GM12878 (cell line): ENCODE measurements at regions of chr14 and their contacts with region 1.

Region 1: DNA sequence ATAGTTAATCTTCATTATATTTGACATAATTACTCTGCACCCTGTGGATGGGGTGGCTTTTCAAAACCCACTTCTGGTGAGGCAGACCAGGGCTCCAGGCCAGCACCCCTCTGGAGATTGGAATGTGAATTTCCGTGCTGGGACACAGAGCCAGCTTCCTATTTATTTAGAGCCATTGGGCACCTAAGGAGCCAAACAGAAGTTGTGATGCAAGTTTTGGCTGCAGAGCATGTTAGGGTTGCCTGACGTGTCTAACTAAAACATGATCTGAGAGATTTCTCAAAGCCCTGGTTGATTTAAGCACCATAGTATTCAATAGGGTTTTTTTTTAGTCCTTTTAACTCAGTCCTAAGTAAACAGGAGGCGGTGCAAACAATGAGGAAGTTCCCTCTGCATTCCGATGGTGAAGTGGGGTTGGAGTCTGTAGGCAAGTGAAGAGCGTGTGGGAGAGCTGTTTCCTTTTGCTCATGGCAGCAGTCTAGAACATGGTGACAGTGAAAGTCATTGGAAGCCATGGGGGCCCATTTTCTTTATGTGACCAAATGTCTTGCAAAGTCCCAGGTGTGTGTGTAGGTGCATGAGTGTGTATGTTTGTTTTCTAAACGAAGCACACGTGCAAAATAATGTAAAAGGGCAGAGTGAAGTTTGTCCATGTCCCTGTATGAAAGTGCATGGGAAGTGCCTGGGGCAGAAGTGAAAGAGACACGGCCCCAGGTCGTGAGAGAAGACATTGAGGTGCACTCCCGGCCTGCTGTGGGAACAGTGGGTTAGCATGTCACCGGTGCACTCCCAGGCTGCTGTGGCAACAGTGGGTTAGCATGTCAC is 117.7 kb downstream of the PRKCH start:
- DNase-seq: peak; percentile 90
- ATAC-seq: peak; percentile 74
- H3K4me3 ChIP-seq: peak overlapping the region; percentile 54
- H3K27ac ChIP-seq: peak overlapping the region; percentile 93
- H3K4me1 ChIP-seq: peaks cover 39% of the 10 kb centered on the region
- H3K27me3 ChIP-seq: no peaks in the 10 kb centered on the region
- CTCF ChIP-seq: no peak
- EP300 ChIP-seq: peak in 1 of 2 experiments; percentile 59; a peak in 1 of 4 replicates
- POLR2A ChIP-seq: no peak; the same call in 1 of the 2 replicates
- RAD21 ChIP-seq: 0 out of 2 replicates have a peak, but pooled peaks have one; percentile 0

Region 2: GRCh38 chr14:61321385-61322010 is 117.6 kb before region 1 on chr14 and contains the start of gene PRKCH:
- CTCF ChIA-PET with region 1: interaction called, 3 read pairs
- POLR2A ChIA-PET with region 1: interaction called, 9 read pairs
- RAD21 ChIA-PET with region 1: interaction called, 4 read pairs
- SMC1A ChIA-PET with region 1: interaction called, 10 read pairs
- in situ Hi-C with region 1: loop called (anchors 25 kb)
- intact Hi-C with region 1: loop called (anchors 1 kb)
- DNase-seq: no peak
- ATAC-seq: peak; percentile 81
- H3K4me3 ChIP-seq: peak within 1 kb of the TSS; percentile 95
- H3K27ac ChIP-seq: peak within 1 kb of the TSS; percentile 80
- H3K4me1 ChIP-seq: peaks cover 6% of the 10 kb centered on the region; the same call in 1 of the 2 replicates
- H3K27me3 ChIP-seq: no peaks in the 10 kb centered on the region; a peak in 1 of 4 replicates
- CTCF ChIP-seq: peak; percentile 3 to 50 (median 20); a peak in 3 of 6 replicates
- EP300 ChIP-seq: no peak
- POLR2A ChIP-seq: peak; percentile 84
- RAD21 ChIP-seq: peak; percentile 41
- polyA plus RNA-seq, gene PRKCH: 10.7 to 12.0 TPM

Region 3: DNA sequence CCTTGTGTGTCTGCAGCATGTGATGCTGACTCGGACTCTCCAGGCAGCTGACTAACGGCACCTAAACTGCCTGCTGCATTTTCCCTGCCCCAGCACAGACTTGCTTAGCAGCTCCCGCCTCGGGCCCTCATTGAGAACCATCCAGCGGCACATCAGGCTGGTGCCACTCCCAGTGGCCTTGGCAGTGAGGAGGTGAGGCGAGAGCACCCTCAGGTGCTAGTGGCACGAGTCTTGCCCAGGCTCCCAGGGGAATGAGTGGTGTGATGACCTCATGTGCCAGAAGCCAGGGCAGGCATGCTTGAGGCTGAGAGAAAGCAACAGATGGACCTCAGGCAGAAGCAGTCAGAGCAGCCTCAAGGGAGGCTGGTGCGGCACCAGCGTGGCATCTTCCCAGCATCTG is 57.5 kb before region 1 on chr14:
- CTCF ChIA-PET with region 1: interaction called, 3 read pairs
- POLR2A ChIA-PET with region 1: interaction called, 66 read pairs
- RAD21 ChIA-PET with region 1: interaction called, 87 read pairs
- SMC1A ChIA-PET with region 1: interaction called, 21 read pairs
- in situ Hi-C with region 1: no loop called
- intact Hi-C with region 1: no loop called
- DNase-seq: no peak
- ATAC-seq: peak; percentile 5
- H3K4me3 ChIP-seq: no peak overlapping the region
- H3K27ac ChIP-seq: no peak overlapping the region; the same call in 1 of the 2 replicates
- H3K4me1 ChIP-seq: peaks cover 55% of the 10 kb centered on the region
- H3K27me3 ChIP-seq: no peaks in the 10 kb centered on the region
- CTCF ChIP-seq: no peak
- EP300 ChIP-seq: no peak
- POLR2A ChIP-seq: no peak
- RAD21 ChIP-seq: no peak

Region 4: DNA sequence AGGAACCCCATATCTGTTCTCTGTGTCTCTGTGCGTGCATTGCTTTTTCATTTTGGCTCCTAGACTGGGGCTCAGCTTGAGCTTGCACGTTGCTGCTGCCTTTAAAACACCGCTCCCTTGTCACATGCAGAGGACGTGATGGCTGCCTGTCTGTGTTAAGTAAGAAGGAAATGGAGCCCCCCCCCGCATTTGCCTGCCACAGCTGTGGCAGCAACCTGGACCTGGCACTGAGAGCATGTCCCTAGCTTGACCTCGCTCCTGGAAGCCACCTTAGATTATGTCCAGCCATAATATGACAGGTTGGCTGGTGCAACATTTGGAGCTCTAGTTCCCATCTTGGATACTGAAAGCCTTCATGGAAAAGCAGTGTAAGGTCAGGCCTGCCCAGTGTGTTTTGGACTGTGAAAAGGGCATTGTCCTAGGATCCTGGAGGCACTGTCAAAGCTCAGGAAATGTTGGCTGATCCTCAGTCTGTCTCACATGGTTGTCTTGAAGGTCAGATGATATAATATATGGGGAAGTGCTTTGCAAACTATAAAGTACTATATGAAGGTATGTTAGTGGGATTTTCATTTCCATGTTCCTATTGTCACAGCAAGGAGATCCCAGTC is 43.9 kb before region 1 on chr14:
- CTCF ChIA-PET with region 1: interaction called, 8 read pairs
- POLR2A ChIA-PET with region 1: interaction called, 66 read pairs
- RAD21 ChIA-PET with region 1: interaction called, 87 read pairs
- SMC1A ChIA-PET with region 1: interaction called, 60 read pairs
- in situ Hi-C with region 1: no loop called
- intact Hi-C with region 1: no loop called
- DNase-seq: no peak
- ATAC-seq: no peak
- H3K4me3 ChIP-seq: no peak overlapping the region
- H3K27ac ChIP-seq: no peak overlapping the region
- H3K4me1 ChIP-seq: peaks cover 22% of the 10 kb centered on the region
- H3K27me3 ChIP-seq: no peaks in the 10 kb centered on the region
- CTCF ChIP-seq: no peak
- EP300 ChIP-seq: no peak
- POLR2A ChIP-seq: no peak
- RAD21 ChIP-seq: no peak

Region 5: GRCh38 chr14:61456720-61457119 is 17.6 kb after region 1 on chr14:
- CTCF ChIA-PET with region 1: interaction called, 5 read pairs
- POLR2A ChIA-PET with region 1: no interaction called
- RAD21 ChIA-PET with region 1: interaction called, 3 read pairs
- SMC1A ChIA-PET with region 1: interaction called, 10 read pairs
- in situ Hi-C with region 1: no loop called
- intact Hi-C with region 1: no loop called
- DNase-seq: no peak
- ATAC-seq: peak; percentile 86
- H3K4me3 ChIP-seq: no peak overlapping the region
- H3K27ac ChIP-seq: no peak overlapping the region
- H3K4me1 ChIP-seq: peaks cover 6% of the 10 kb centered on the region
- H3K27me3 ChIP-seq: no peaks in the 10 kb centered on the region
- CTCF ChIP-seq: peak; percentile 77 to 80 (median 80)
- EP300 ChIP-seq: no peak
- POLR2A ChIP-seq: no peak
- RAD21 ChIP-seq: peak; percentile 73